PC-9 (cell line): ENCODE measurements at regions of chr6 and their contacts with region 1.

Region 1: GRCh38 chr6:13641315-13641714 is 26.2 kb downstream of the NOL7 start:
- DNase-seq: no peak
- H3K4me3 ChIP-seq: no peak overlapping the region
- H3K27ac ChIP-seq: no peak overlapping the region
- H3K4me1 ChIP-seq: no peaks in the 10 kb centered on the region
- H3K27me3 ChIP-seq: no peaks in the 10 kb centered on the region
- CTCF ChIP-seq: no peak

Region 2: GRCh38 chr6:13032566-13032965 is 608.7 kb before region 1 on chr6:
- CTCF ChIA-PET with region 1: no interaction called
- POLR2A ChIA-PET with region 1: interaction called, 11 read pairs
- intact Hi-C with region 1: no loop called
- DNase-seq: no peak
- H3K4me3 ChIP-seq: no peak overlapping the region
- H3K27ac ChIP-seq: no peak overlapping the region
- H3K4me1 ChIP-seq: no peaks in the 10 kb centered on the region
- H3K27me3 ChIP-seq: peaks cover 7% of the 10 kb centered on the region; the same call in 1 of the 2 replicates
- CTCF ChIP-seq: no peak